Activated T-helper 2 cell treated with anti-CD3 and anti-CD28 coated beads, Interferon-gamma antibody, Interleukin-2, Interleukin-4, amounts not matched to agents 10 μg/mL and 5 μg/mL and 100 μg/mL, durations not matched to agents 14 hours and 24 hours and 36 hours (primary cell): ENCODE measurements at regions of chr11 and their contacts with region 1.

Region 1: GRCh38 chr11:36409152-36409816 is 100.8 kb downstream of the TRAF6 start:
- DNase-seq: peak; percentile 14
- H3K4me3 Mint-ChIP-seq: peak overlapping the region; percentile 18
- H3K27ac Mint-ChIP-seq: peak overlapping the region; percentile 76
- H3K4me1 Mint-ChIP-seq: peaks cover 56% of the 10 kb centered on the region
- H3K27me3 Mint-ChIP-seq: no peaks in the 10 kb centered on the region

Region 2: DNA sequence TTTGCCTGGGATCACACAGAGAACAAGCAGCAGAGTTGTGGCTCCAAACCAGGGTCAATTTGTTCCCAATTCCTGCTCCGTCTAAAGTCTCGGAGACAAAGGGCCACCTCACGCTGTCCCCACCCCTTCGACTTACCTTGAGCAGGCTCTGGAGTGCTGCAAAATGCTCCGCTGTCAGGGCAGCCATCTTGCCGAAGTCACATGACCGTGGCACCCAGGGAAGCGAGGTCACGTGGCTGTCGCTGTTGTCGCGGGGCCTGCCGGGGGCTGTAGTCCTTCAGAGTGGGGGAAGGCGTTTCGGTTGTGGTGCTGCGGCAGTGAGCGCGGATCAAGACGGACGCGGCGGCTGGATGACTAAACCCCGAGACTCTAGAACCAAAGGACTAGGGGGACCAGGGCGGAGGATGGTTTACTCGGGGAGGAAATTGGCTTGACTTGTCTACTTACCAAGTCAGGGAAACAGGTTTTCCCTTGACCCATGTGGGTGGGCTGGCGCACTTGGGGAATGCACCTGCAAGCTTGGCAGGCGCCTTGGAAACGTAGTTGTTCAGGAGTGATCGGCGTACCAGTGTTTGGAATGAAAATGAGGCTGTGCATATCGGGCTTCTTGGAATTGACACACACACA is 119.9 kb before region 1 on chr11 and contains the start of gene COMMD9:
- intact Hi-C with region 1: no loop called
- DNase-seq: peak; percentile 92
- H3K4me3 Mint-ChIP-seq: peak within 1 kb of the TSS; percentile 88
- H3K27ac Mint-ChIP-seq: peak within 1 kb of the TSS; percentile 75
- H3K4me1 Mint-ChIP-seq: peaks cover 22% of the 10 kb centered on the region
- H3K27me3 Mint-ChIP-seq: no peaks in the 10 kb centered on the region
- total RNA-seq, gene COMMD9: 35.8 and 39.8 TPM in 2 replicates

Region 3: DNA sequence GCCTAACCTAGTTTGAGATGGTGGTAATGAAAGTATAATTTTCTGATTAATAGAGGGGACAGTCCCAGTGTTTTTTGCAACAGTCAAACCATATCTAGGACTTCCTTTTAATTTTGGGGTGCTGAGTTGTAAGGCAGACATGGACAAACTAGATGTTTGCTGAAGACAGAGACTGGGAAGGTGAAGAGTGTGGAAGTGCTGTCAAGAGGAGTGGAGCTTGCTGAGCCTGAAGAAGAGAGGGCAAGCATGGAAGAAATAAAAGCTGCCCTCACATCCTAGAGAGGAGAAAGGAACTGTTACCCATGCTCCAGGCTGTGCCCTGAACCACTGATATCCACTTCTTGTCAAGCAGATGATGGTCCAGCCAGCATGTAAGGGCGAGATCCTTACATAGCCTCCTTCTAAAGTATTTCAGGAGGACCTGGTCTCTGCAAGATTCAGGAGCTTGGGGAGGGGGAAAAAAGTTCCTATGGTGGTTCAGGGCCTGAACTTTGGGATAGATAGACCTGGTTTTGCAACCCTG is 61.8 kb before region 1 on chr11:
- intact Hi-C with region 1: no loop called
- DNase-seq: no peak
- H3K4me3 Mint-ChIP-seq: no peak overlapping the region
- H3K27ac Mint-ChIP-seq: peak overlapping the region; percentile 44
- H3K4me1 Mint-ChIP-seq: peaks cover 35% of the 10 kb centered on the region
- H3K27me3 Mint-ChIP-seq: peaks cover 28% of the 10 kb centered on the region

Region 4: DNA sequence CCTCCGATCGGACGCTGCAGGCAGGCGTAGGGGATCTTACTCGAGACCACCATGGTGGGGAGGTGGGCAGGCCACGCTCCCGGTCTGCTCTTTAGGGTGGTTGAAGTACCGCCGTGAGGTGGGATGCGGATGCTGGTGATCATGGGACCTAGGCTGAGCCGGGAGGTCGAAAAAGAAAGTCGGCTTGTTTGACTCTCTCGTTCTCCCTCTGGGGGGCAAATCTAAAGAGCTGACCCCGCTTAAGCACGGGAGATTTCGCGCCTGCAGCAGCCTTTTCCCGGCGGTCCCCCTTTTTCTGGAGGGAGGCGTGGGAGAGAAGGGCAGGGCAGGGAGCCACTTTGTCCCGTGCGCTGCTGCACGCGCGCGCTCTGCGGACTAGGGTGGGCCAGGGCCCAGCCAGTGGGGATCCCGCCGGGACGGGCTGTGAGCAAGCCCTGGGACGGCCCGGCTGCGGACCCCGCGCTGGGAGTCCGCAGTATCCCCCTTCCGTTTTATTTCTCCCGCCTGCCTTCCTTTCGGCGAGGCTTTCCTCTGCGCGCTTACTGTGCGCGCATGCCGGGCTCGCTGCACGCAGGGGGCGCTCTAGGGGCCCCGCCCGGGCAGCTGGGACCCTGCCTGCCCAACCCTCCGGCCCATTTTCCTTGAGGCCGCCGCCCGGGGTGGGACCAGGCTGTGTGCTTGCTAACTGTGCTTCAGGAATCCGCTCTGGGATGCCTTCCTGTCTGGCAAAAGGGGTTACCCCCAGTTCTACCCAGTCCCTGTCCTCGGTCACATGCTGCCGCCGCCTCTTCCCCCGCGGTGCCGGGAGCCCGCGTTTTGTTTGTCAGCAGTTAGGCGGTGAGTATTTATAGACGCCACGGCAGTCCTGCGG is 32.2 kb before region 1 on chr11:
- intact Hi-C with region 1: loop called (anchors 1 kb)
- DNase-seq: peak; percentile 49
- H3K4me3 Mint-ChIP-seq: peak overlapping the region; percentile 89
- H3K27ac Mint-ChIP-seq: peak overlapping the region; percentile 81
- H3K4me1 Mint-ChIP-seq: peaks cover 28% of the 10 kb centered on the region
- H3K27me3 Mint-ChIP-seq: peaks cover 65% of the 10 kb centered on the region

Region 5: GRCh38 chr11:36421546-36422155 is 12.4 kb after region 1 on chr11:
- intact Hi-C with region 1: loop called (anchors 1 kb)
- DNase-seq: no peak
- H3K4me3 Mint-ChIP-seq: peak overlapping the region; percentile 10
- H3K27ac Mint-ChIP-seq: peak overlapping the region; percentile 70
- H3K4me1 Mint-ChIP-seq: peaks cover 56% of the 10 kb centered on the region
- H3K27me3 Mint-ChIP-seq: peaks cover 8% of the 10 kb centered on the region

Region 6: GRCh38 chr11:36431429-36432092 is 22.3 kb after region 1 on chr11:
- intact Hi-C with region 1: loop called (anchors 1 kb)
- DNase-seq: no peak
- H3K4me3 Mint-ChIP-seq: no peak overlapping the region
- H3K27ac Mint-ChIP-seq: peak overlapping the region; percentile 30
- H3K4me1 Mint-ChIP-seq: peaks cover 12% of the 10 kb centered on the region
- H3K27me3 Mint-ChIP-seq: peaks cover 2% of the 10 kb centered on the region

Region 7: DNA sequence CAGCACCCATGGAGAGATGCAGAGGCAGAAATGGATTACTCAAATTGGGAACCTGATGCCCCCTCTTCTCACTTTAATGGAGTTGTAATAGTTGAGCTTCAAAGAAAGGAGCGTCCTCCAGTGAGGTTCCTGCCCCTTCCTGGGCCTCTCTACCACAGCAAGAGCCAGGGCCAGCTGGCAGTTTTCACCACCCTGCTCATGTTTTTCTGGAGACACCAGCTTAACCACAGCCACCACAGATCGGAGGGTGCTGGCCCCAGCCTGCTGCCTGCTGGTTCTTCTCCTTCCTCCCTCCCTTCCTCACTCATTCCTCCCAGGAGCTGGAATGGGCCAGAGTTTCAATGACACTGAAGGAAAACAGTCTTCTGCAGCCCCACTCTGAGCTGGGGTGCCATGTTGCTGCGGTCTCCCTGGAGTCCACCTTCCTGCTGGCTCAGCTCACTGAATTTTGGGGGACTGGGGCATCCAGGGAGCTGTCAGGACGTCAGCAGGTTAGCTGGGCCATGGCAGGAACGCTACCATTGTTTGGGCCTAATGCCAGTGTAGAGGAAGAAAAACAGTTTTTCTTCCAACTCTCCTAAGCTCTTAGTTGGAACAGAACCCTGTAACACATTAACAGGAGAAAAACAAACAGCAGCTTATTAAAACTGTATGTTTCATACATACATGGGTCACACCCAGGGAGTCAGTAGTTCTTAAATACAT is 43.1 kb after region 1 on chr11:
- intact Hi-C with region 1: loop called (anchors 1 kb)
- DNase-seq: no peak
- H3K4me3 Mint-ChIP-seq: peak overlapping the region; percentile 53
- H3K27ac Mint-ChIP-seq: peak overlapping the region; percentile 70
- H3K4me1 Mint-ChIP-seq: peaks cover 55% of the 10 kb centered on the region
- H3K27me3 Mint-ChIP-seq: peaks cover 6% of the 10 kb centered on the region